CD8-positive, alpha-beta T cell (primary cell): ENCODE measurements at regions of chr22 and their contacts with region 1.

Region 1: GRCh38 chr22:37745548-37746365 is 48.9 kb downstream of the TRIOBP start:
- DNase-seq: peak; percentile 69 to 91 (median 85)
- ATAC-seq: peak; percentile 96
- H3K4me3 ChIP-seq: peak overlapping the region; percentile 67 to 85
- H3K4me3 Mint-ChIP-seq: peak overlapping the region; percentile 90
- H3K27ac ChIP-seq: peak overlapping the region; percentile 37 to 39
- H3K27ac Mint-ChIP-seq: peak overlapping the region; percentile 81
- H3K4me1 ChIP-seq: peaks cover 26% of the 10 kb centered on the region
- H3K4me1 Mint-ChIP-seq: peaks cover 18% of the 10 kb centered on the region
- H3K27me3 ChIP-seq: no peaks in the 10 kb centered on the region
- H3K27me3 Mint-ChIP-seq: no peaks in the 10 kb centered on the region
- CTCF ChIP-seq: no peak

Region 2: DNA sequence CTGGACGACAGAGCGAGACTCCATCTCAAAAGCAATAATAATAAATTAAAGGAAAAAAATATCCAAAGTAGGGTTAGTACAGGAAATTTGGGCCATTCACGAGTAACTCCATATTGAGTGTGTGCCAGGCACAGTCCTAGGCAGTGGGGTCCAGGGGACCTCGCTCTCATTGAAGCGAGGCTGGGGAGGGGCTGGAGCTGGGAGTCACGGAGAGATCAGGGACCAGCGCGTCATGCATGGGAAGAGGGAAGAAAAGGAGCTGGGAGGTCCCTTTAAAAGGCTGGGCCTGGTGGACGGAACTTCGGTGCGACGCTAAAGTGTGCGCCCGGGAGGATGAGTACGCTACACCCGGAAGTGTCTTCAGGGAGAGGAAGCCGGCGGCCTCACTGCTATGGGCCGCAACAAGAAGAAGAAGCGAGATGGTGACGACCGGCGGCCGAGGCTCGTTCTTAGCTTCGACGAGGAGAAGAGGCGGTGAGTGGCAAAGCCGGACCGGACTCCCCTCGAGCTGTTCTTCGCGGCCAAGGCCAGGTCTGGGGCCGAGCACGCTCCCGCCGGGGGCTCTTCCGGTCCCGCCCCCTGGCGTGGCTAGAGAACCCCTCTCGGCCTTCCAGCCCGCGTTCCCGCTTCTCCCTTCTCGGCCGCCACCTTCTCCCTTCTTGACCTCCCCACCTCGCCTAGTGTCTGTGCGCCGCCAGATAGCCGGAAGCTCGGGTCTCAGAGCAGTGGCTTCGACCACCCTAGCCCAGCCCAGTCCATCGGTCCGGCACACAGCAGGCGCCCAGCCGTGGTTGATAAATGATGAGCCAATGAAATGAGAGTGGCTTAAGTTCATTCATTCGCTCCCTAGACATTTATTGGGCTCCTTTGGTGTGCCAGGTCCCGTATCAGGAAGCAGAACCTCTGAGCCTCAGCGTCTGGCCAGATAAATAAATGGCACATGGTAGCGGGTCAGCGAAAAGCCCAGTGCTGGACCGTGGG is 59.5 kb before region 1 on chr22 and contains the start of gene NOL12:
- CTCF ChIA-PET with region 1: no interaction called
- POLR2A ChIA-PET with region 1: interaction called, 3 read pairs
- intact Hi-C with region 1: loop called in 1 of 2 experiments (anchors 1 kb)
- DNase-seq: peak; percentile 63 to 90 (median 74)
- ATAC-seq: peak; percentile 91
- H3K4me3 ChIP-seq: peak within 1 kb of the TSS; percentile 88 to 97
- H3K4me3 Mint-ChIP-seq: peak within 1 kb of the TSS; percentile 94
- H3K27ac ChIP-seq: peak within 1 kb of the TSS; percentile 79 to 87
- H3K27ac Mint-ChIP-seq: peak within 1 kb of the TSS; percentile 95
- H3K4me1 ChIP-seq: peaks cover 16% of the 10 kb centered on the region
- H3K4me1 Mint-ChIP-seq: peaks cover 28% of the 10 kb centered on the region
- H3K27me3 ChIP-seq: no peaks in the 10 kb centered on the region
- H3K27me3 Mint-ChIP-seq: no peaks in the 10 kb centered on the region
- CTCF ChIP-seq: no peak
- total RNA-seq, gene NOL12: 25.1 to 29.1 TPM

Region 3: GRCh38 chr22:37807410-37808293 is 61.9 kb after region 1 on chr22 and contains the start of gene GCAT:
- CTCF ChIA-PET with region 1: no interaction called
- POLR2A ChIA-PET with region 1: interaction called, 3 read pairs
- intact Hi-C with region 1: loop called in 1 of 2 experiments (anchors 2 kb)
- DNase-seq: peak; percentile 63 to 92 (median 83)
- ATAC-seq: peak; percentile 91
- H3K4me3 ChIP-seq: peak within 1 kb of the TSS; percentile 51 to 55
- H3K4me3 Mint-ChIP-seq: peak within 1 kb of the TSS; percentile 75
- H3K27ac ChIP-seq: no peak within 1 kb of the TSS
- H3K27ac Mint-ChIP-seq: no peak within 1 kb of the TSS
- H3K4me1 ChIP-seq: peaks cover 37% of the 10 kb centered on the region
- H3K4me1 Mint-ChIP-seq: peaks cover 36% of the 10 kb centered on the region
- H3K27me3 ChIP-seq: peaks cover 17 to 66% of the 10 kb centered on the region in 2 experiments
- H3K27me3 Mint-ChIP-seq: peaks cover 47% of the 10 kb centered on the region
- CTCF ChIP-seq: no peak
- total RNA-seq, gene GCAT: 1.3 to 1.6 TPM

Region 4: DNA sequence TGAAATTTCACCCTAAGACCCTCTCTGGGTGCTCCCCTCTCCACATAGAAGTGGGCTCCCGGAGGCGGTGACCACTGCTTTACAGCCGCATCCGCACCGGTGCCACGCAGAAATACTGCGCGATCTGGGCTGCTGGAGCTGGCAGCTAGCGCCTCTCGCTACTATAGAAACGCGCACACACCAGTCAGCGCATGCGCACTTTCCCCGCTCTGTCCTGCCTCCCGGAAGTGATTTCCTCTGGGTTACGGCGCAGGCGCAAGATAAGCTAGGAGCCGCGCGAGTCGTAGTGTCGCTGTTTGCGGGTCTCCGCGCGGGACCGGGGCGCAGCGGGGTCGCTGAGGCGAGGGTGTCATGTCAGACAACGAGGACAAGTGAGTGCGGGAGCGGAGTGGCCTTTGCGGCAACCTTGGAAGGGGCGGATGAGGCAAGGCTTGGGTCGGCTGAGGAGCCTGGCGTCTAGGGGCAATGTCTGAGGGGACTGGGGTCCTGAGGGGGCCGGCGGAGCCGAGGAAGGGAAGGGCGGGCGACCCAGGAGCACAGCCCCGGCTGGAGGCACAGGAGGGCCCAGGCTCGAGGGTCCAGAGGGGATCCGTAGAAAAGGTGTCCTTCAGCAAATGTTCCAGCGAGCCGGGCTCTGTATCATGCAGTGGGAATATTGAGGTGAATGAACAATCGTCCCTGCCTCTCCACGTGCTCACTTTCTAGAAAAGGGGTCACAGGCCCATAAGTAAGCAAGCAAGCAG is 207.9 kb after region 1 on chr22 and contains the starts of genes C22orf23 and POLR2F:
- CTCF ChIA-PET with region 1: no interaction called
- POLR2A ChIA-PET with region 1: no interaction called
- intact Hi-C with region 1: loop called in 1 of 2 experiments (anchors 5 kb)
- DNase-seq: peak; percentile 88 to 98 (median 97)
- ATAC-seq: peak; percentile 94
- H3K4me3 ChIP-seq: peak within 1 kb of the TSS; percentile 91 to 98
- H3K4me3 Mint-ChIP-seq: peak within 1 kb of the TSS; percentile 100
- H3K27ac ChIP-seq: peak within 1 kb of the TSS; percentile 62 to 79
- H3K27ac Mint-ChIP-seq: peak within 1 kb of the TSS; percentile 98
- H3K4me1 ChIP-seq: peaks cover 13% of the 10 kb centered on the region
- H3K4me1 Mint-ChIP-seq: peaks cover 45% of the 10 kb centered on the region
- H3K27me3 ChIP-seq: peaks cover 0 to 6% of the 10 kb centered on the region in 2 experiments
- H3K27me3 Mint-ChIP-seq: peaks cover 12% of the 10 kb centered on the region
- CTCF ChIP-seq: no peak
- total RNA-seq, gene C22orf23: 0.43 TPM in 1 of 2 experiments, not detected in the other
- total RNA-seq, gene POLR2F: 22.7 to 25.6 TPM